ENCODE measurements at regions of chr10 and their contacts with region 1.

Region 1: GRCh38 chr10:79137826-79138225 is 69.1 kb downstream of the ZMIZ1 start:
- DNase-seq: peak in 3 of 5 donors; percentile 58 to 68 (median 63)
- ATAC-seq: peak in 3 of 4 donors; percentile 8 to 31 (median 18)
- H3K4me3 ChIP-seq: peak overlapping the region in 2 of 12 donors; percentile 21
- H3K27ac ChIP-seq: peak overlapping the region; percentile 80 to 97 (median 89)
- H3K4me1 ChIP-seq: peaks cover 51 to 100% (median 98%) of the 10 kb centered on the region in 12 donors
- H3K27me3 ChIP-seq: no peaks in the 10 kb centered on the region
- CTCF ChIP-seq: no peak
- POLR2A ChIP-seq: no peak

Region 2: DNA sequence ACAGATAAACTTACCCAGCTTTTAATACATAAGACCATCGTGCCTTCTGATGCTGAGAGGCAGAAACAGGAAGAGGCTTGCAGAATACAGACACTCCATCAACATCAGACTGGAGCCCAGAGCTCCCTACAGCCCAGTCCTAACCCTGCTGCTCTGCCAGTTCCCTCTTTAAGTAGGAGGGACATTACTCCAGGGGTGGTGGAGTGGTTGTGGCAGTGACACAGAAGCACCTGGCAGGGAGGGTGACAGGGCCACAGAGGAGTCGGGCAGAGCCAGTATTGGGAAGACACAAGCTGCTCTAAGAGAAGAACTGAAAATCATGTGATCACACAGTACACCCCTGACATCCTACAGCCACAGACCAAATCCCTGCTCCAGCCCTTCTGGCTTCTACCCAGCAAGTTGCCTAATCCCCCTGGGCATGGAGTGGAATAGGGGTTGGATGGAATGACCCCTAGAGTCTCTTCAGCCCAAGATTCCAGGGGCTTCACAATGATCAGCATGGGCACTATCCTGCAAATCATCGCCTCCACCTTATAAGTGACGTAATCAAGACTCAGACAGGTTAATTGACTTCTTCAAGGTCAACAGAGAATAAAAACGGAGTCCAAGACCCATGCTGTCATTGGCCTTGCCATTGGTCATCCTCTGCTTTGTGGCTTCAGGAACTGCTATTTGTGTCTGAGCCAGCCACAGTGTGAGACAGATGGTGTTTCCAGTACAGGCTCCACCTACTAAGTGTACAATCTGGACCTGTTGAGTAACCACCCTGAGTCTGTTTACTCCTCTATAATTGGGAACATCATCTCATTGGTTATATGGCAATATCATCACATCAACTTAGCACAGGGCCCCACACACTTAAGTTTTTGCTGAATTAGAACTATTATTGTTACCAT is 130.2 kb before region 1 on chr10:
- intact Hi-C with region 1: no loop called
- DNase-seq: no peak
- ATAC-seq: peak in 3 of 4 donors; percentile 9 to 50 (median 49)
- H3K4me3 ChIP-seq: no peak overlapping the region
- H3K27ac ChIP-seq: no peak overlapping the region
- H3K4me1 ChIP-seq: peaks cover 0 to 19% (median 7%) of the 10 kb centered on the region in 12 donors
- H3K27me3 ChIP-seq: no peaks in the 10 kb centered on the region
- CTCF ChIP-seq: no peak
- POLR2A ChIP-seq: no peak

Region 3: GRCh38 chr10:79084012-79084971 is 53.5 kb before region 1 on chr10:
- intact Hi-C with region 1: loop called in 3 of 10 experiments (anchors 2 to 10 kb)
- DNase-seq: peak; percentile 88 to 96 (median 95)
- ATAC-seq: peak; percentile 54 to 74 (median 62)
- H3K4me3 ChIP-seq: peak overlapping the region in 1 of 12 donors; percentile 29
- H3K27ac ChIP-seq: peak overlapping the region; percentile 53 to 99 (median 77)
- H3K4me1 ChIP-seq: peaks cover 28 to 100% (median 97%) of the 10 kb centered on the region in 12 donors
- H3K27me3 ChIP-seq: no peaks in the 10 kb centered on the region
- CTCF ChIP-seq: no peak
- POLR2A ChIP-seq: no peak

Region 4: DNA sequence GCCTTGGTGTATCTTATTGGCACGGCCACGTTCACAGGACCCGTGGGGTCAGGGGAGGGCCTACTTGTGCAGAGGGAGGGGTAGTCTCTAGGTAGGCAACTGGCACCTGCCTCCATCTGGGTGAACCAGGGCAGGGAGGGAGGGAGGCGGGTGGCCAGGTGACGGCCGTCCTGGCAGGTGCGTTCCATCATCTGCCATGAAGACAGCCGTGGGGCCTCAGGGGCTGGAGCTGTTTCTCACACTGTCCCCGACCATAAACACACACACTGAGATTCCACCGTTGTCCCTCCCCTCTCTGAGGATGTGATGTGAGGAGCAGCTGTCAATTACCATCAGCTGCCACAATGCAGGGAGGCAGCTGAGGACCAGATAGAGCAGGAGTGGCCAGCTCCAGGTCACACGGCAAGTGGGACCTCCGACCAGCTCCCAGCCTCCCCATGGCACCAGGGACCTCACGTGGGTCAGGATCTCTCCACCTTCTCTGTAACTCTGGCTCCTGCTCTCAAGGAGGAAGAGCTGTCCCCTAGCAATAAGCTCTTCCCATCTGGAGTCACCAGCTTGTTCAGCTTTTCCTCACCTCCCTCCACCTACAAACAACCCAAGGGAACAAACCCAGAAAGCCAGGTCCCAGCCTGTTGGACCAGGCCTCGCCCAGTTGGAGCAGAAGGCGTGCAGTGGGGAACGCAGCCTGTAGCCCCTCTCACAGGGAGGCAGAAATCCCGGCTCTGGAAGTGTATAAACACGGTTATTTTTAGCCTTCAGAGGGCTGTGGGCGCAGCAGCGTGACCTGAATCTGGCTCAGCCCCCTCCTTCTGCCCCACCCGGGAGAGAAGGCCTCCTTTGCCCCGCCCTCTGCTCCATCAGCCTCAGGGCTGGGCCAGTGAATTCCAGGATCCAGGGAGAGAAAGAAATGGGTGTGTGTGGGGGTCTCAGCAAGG is 36.0 kb before region 1 on chr10:
- intact Hi-C with region 1: no loop called
- DNase-seq: peak; percentile 66 to 78 (median 78)
- ATAC-seq: peak; percentile 65 to 78 (median 70)
- H3K4me3 ChIP-seq: no peak overlapping the region
- H3K27ac ChIP-seq: peak overlapping the region; percentile 7 to 94 (median 81)
- H3K4me1 ChIP-seq: peaks cover 47 to 100% (median 92%) of the 10 kb centered on the region in 12 donors
- H3K27me3 ChIP-seq: no peaks in the 10 kb centered on the region
- CTCF ChIP-seq: no peak
- POLR2A ChIP-seq: no peak

Region 5: GRCh38 chr10:79184145-79184625 is 46.4 kb after region 1 on chr10:
- intact Hi-C with region 1: loop called in 1 of 10 experiments (anchors 10 kb)
- DNase-seq: no peak
- ATAC-seq: peak in 3 of 4 donors; percentile 8 to 33 (median 9)
- H3K4me3 ChIP-seq: no peak overlapping the region
- H3K27ac ChIP-seq: peak overlapping the region in 11 of 12 donors; percentile 30 to 79 (median 67)
- H3K4me1 ChIP-seq: peaks cover 40 to 100% (median 95%) of the 10 kb centered on the region in 12 donors
- H3K27me3 ChIP-seq: no peaks in the 10 kb centered on the region
- CTCF ChIP-seq: no peak
- POLR2A ChIP-seq: no peak

Region 6: DNA sequence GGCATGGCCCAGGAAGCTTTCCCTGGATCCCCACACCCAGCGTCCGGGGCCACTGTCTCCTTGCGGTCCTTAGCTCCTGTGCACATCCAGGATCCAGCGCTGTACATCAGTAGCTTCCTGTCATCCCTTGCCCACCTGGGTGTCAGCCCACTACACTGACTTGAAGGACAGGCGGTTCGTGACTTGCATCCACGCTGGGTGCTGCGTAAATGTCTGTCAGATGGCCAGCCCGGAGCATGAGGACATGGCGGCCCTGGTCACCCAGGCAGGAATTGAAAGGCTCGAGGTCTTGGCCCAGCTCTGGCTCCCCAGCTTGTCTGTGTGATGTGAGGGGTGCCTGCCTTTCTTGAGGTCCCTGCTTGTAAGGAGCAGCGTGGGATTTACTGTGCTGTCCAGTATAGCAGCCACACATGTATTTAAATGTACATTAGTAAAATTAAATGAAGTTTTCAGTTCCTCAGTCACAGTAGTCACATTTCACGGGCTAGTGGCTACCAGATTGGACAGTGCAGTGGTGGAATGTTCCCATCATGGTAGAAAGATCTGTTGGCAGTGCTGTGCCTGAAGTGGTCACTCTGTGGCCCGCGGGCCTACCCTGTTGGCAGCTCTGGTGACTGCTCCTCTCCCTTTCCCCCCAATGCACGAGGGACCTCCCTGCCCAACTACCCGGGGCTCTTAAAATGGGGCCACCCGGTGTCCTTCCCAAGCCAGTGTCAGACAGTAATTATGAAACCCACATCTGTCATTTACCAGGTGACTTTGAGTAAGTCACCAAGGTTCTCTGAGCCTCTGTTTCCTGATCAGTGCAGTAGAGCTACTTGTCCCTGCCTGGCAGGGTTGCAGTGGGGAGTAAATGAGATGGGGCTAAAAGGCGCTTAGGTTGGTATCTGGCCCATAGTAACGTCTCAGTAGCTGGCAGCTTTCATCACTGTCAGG is 111.6 kb after region 1 on chr10:
- intact Hi-C with region 1: no loop called
- DNase-seq: no peak
- ATAC-seq: no peak
- H3K4me3 ChIP-seq: no peak overlapping the region
- H3K27ac ChIP-seq: peak overlapping the region in 9 of 12 donors; percentile 78 to 93 (median 88)
- H3K4me1 ChIP-seq: peaks cover 23 to 96% (median 83%) of the 10 kb centered on the region in 12 donors
- H3K27me3 ChIP-seq: no peaks in the 10 kb centered on the region
- CTCF ChIP-seq: no peak
- POLR2A ChIP-seq: no peak

Measured in heart left ventricle (tissue), 16 donors.